ENCODE measurements at regions of chr3 and their contacts with region 1.

Region 1: GRCh38 chr3:14434126-14434517 is 31.7 kb downstream of the SLC6A6 start:
- DNase-seq: peak; percentile 83 to 89 (median 83)
- H3K4me3 ChIP-seq: peak overlapping the region in 1 of 3 experiments; percentile 44
- H3K4me3 Mint-ChIP-seq: peak overlapping the region; percentile 54 to 56
- H3K27ac ChIP-seq: peak overlapping the region; percentile 97 to 100
- H3K27ac Mint-ChIP-seq: peak overlapping the region; percentile 97 to 100 (median 100)
- H3K4me1 ChIP-seq: peaks cover 94 to 98% of the 10 kb centered on the region in 2 donors
- H3K4me1 Mint-ChIP-seq: peaks cover 94% of the 10 kb centered on the region
- H3K27me3 ChIP-seq: no peaks in the 10 kb centered on the region
- H3K27me3 Mint-ChIP-seq: peaks cover 0 to 2% (median 0%) of the 10 kb centered on the region in 3 donors
- CTCF ChIP-seq: no peak

Region 2: DNA sequence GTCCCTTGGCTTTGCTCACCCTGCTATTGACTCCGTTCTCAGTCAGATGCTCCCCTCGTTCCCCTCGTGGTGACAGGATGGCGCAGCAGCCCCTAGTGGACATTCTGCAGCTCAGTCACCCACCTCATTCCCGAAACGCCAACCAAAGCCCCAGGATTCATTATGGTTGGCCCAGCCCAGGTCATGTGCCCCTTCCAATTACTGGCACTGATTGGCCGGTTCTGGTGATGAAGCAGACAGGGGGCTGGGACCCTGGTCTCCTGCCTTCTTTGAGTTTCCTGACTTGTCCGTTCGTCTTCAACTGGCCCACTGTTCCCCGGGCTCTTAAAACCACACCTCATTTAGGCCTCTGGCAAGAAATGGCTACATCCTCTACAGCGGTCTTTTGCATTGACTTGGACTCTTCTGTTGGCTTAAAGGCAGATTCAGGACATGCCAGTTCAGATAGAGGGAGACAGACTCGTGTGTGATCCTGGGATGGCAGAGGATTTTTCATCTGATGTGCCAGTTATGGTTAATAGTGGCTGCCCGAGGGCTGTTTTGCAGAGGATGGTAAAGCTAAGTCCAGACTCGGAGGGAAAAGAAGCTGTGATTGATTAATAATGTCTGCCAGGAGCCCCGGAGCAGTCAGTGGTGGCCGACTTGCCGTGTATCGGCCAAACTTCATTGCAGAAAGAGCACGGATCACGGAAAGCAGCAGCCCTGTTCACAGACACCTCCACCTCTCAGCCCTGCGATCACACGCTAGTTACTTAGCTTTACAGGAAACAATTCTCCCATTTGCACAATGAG is 217.7 kb before region 1 on chr3:
- intact Hi-C with region 1: no loop called
- DNase-seq: peak; percentile 4 to 44 (median 21)
- H3K4me3 ChIP-seq: peak overlapping the region in 1 of 3 experiments; percentile 28
- H3K4me3 Mint-ChIP-seq: peak overlapping the region; percentile 18 to 85
- H3K27ac ChIP-seq: no peak overlapping the region
- H3K27ac Mint-ChIP-seq: peak overlapping the region in 4 of 7 donors; percentile 72 to 89 (median 76)
- H3K4me1 ChIP-seq: no peaks in the 10 kb centered on the region
- H3K4me1 Mint-ChIP-seq: peaks cover 13% of the 10 kb centered on the region
- H3K27me3 ChIP-seq: no peaks in the 10 kb centered on the region
- H3K27me3 Mint-ChIP-seq: peaks cover 0 to 4% (median 2%) of the 10 kb centered on the region in 3 donors
- CTCF ChIP-seq: peak; percentile 44

Region 3: GRCh38 chr3:14371573-14372474 is 62.3 kb before region 1 on chr3:
- intact Hi-C with region 1: no loop called
- DNase-seq: peak; percentile 90 to 95 (median 94)
- H3K4me3 ChIP-seq: peak overlapping the region in 1 of 3 experiments; percentile 18
- H3K4me3 Mint-ChIP-seq: peak overlapping the region in 1 of 2 donors; percentile 80
- H3K27ac ChIP-seq: peak overlapping the region; percentile 34 to 65
- H3K27ac Mint-ChIP-seq: peak overlapping the region; percentile 86 to 96 (median 90)
- H3K4me1 ChIP-seq: peaks cover 45 to 72% of the 10 kb centered on the region in 2 donors
- H3K4me1 Mint-ChIP-seq: peaks cover 71% of the 10 kb centered on the region
- H3K27me3 ChIP-seq: no peaks in the 10 kb centered on the region
- H3K27me3 Mint-ChIP-seq: peaks cover 1 to 5% (median 4%) of the 10 kb centered on the region in 3 donors
- CTCF ChIP-seq: peak; percentile 39

Region 4: DNA sequence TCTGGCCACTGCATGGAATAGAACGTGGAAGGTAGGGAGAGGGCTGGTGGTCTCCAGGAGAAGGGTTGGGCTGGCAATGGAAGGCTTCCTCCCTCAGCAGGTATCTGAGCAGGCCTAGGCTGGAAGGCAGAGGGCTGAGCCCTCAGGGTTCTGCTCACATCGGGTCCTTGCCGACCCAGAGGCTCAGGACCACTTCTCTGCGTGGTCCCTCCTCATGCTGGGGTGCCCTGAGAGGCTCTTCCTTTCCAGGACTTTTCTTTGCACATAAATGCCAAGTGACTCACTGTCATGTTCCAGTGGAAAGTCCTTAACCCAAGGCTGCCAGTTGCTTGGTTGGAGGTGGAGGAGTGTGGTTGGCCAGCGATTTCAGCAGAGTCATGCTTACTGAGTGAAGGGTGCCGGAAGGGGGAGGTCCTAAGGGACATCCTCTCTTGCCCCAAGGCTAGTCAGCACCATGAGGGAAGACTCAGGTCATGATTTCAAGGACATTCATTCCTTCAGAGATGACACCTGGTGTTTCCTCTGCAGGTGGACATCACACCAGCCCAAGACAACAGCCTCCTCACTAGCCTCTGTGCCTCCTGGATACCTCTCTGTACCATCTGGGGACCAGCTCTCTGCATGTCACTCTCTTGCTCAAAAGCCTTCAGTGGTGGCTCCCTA is 23.5 kb before region 1 on chr3:
- intact Hi-C with region 1: loop called in 1 of 2 experiments (anchors 2 kb)
- DNase-seq: peak; percentile 94 to 99 (median 96)
- H3K4me3 ChIP-seq: peak overlapping the region in 1 of 3 experiments; percentile 37
- H3K4me3 Mint-ChIP-seq: peak overlapping the region; percentile 67 to 69
- H3K27ac ChIP-seq: peak overlapping the region; percentile 94 to 98
- H3K27ac Mint-ChIP-seq: peak overlapping the region; percentile 98 to 100 (median 99)
- H3K4me1 ChIP-seq: peaks cover 60 to 79% of the 10 kb centered on the region in 2 donors
- H3K4me1 Mint-ChIP-seq: peaks cover 76% of the 10 kb centered on the region
- H3K27me3 ChIP-seq: no peaks in the 10 kb centered on the region
- H3K27me3 Mint-ChIP-seq: peaks cover 0 to 2% (median 0%) of the 10 kb centered on the region in 3 donors
- CTCF ChIP-seq: no peak

Region 5: GRCh38 chr3:14740983-14741382 is 306.9 kb after region 1 on chr3:
- intact Hi-C with region 1: no loop called
- DNase-seq: no peak
- H3K4me3 ChIP-seq: no peak overlapping the region
- H3K4me3 Mint-ChIP-seq: no peak overlapping the region
- H3K27ac ChIP-seq: no peak overlapping the region
- H3K27ac Mint-ChIP-seq: no peak overlapping the region
- H3K4me1 ChIP-seq: no peaks in the 10 kb centered on the region
- H3K4me1 Mint-ChIP-seq: no peaks in the 10 kb centered on the region
- H3K27me3 ChIP-seq: no peaks in the 10 kb centered on the region
- H3K27me3 Mint-ChIP-seq: peaks cover 1 to 9% (median 4%) of the 10 kb centered on the region in 3 donors
- CTCF ChIP-seq: no peak

Measured in CD14-positive monocyte (primary cell).